ENCODE measurements at regions of chrX and their contacts with region 1.

Region 1: DNA sequence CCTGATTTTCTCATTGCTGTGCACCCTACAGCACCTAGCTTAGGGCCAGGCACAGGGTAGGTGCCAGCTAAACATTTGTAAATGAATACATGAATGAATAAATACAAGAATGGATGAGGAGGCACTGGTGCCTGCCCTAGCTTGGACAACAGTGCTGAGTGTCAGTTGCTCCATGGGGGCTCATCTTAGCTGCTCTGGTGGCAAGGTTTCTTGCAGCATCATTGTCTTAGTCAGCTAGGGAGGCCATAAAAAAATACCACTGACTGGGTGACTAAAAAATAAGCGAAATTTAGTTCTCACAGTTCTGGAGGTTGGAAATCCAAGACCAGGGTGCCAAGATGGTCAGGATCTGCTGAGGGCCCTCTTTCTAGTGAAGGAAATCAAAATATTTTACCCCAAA is 31.2 kb downstream of the TMEM31 start:
- DNase-seq: no peak
- H3K4me3 ChIP-seq: peak overlapping the region in 2 of 4 experiments; percentile 3 to 81; a peak in 3 of 8 replicates
- H3K27ac ChIP-seq: peak overlapping the region; percentile 81
- H3K4me1 ChIP-seq: peaks cover 2 to 16% (median 9%) of the 10 kb centered on the region in 4 experiments; a peak in 5 of 7 replicates
- H3K27me3 ChIP-seq: no peaks in the 10 kb centered on the region
- CTCF ChIP-seq: no peak
- EP300 ChIP-seq: no peak
- POLR2A ChIP-seq: no peak
- RAD21 ChIP-seq: no peak

Region 2: GRCh38 chrX:103711533-103712369 is 30.1 kb before region 1 on chrX:
- CTCF ChIA-PET with region 1: interaction called, 12 read pairs
- POLR2A ChIA-PET with region 1: interaction called, 17 read pairs
- DNase-seq: peak in 1 of 2 experiments; percentile 78
- H3K4me3 ChIP-seq: no peak overlapping the region
- H3K27ac ChIP-seq: peak overlapping the region; percentile 62; the same call in 1 of the 2 replicates
- H3K4me1 ChIP-seq: peaks cover 0 to 6% (median 3%) of the 10 kb centered on the region in 4 experiments; a peak in 5 of 7 replicates
- H3K27me3 ChIP-seq: no peaks in the 10 kb centered on the region
- CTCF ChIP-seq: peak in 2 of 3 experiments; percentile 51 to 70; a peak in 3 of 4 replicates
- EP300 ChIP-seq: no peak
- POLR2A ChIP-seq: no peak
- RAD21 ChIP-seq: peak; percentile 61 to 70

Region 3: GRCh38 chrX:103716962-103717361 is 24.9 kb before region 1 on chrX:
- CTCF ChIA-PET with region 1: interaction called, 12 read pairs
- POLR2A ChIA-PET with region 1: interaction called, 17 read pairs
- DNase-seq: no peak
- H3K4me3 ChIP-seq: no peak overlapping the region
- H3K27ac ChIP-seq: no peak overlapping the region
- H3K4me1 ChIP-seq: peaks cover 0 to 2% (median 0%) of the 10 kb centered on the region in 4 experiments; a peak in 3 of 7 replicates
- H3K27me3 ChIP-seq: no peaks in the 10 kb centered on the region
- CTCF ChIP-seq: no peak
- EP300 ChIP-seq: no peak
- POLR2A ChIP-seq: no peak
- RAD21 ChIP-seq: no peak

Region 4: DNA sequence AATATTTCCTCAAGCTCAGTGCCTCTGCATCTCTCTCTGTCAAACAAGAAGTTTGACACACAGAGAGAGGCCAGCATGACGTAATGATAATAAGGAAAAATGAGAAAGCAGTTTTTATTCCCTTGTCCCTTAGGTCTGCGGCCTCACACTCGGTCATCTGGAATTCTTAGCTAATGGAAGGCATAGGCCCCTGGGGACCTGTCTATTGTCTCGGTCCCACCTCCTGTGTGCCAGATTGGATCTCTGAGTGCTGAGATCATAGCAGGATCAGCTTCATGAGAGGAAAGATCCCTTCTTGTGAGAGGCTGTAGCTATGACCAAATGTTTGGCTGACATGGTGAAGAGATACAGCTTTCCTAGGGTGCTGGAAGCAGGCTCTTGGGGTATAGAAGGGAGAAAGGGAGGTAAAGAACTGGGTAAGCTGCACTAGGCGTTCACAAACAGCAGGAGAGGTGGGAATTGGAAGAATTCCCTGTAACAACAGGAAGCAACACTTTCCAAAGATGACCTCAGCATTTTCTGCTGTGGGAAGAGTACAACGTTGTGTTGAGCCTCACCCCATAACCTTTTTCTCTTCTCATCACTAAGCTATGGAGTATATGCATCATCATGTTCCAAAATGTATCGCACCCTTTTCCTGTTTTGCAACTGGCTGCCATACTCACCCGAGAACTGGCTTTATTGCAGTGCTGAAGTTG is 10.9 kb before region 1 on chrX:
- CTCF ChIA-PET with region 1: interaction called, 5 read pairs
- POLR2A ChIA-PET with region 1: interaction called, 26 read pairs
- DNase-seq: no peak
- H3K4me3 ChIP-seq: no peak overlapping the region
- H3K27ac ChIP-seq: no peak overlapping the region
- H3K4me1 ChIP-seq: peaks cover 7 to 22% (median 16%) of the 10 kb centered on the region in 4 experiments
- H3K27me3 ChIP-seq: no peaks in the 10 kb centered on the region; a peak in 1 of 7 replicates
- CTCF ChIP-seq: no peak
- EP300 ChIP-seq: no peak
- POLR2A ChIP-seq: no peak
- RAD21 ChIP-seq: no peak

Region 5: GRCh38 chrX:103774070-103774642 is 32.3 kb after region 1 on chrX:
- CTCF ChIA-PET with region 1: interaction called, 6 read pairs
- POLR2A ChIA-PET with region 1: interaction called, 11 read pairs
- DNase-seq: no peak
- H3K4me3 ChIP-seq: no peak overlapping the region
- H3K27ac ChIP-seq: no peak overlapping the region
- H3K4me1 ChIP-seq: no peaks in the 10 kb centered on the region; a peak in 2 of 7 replicates
- H3K27me3 ChIP-seq: no peaks in the 10 kb centered on the region
- CTCF ChIP-seq: peak; percentile 9 to 36 (median 29)
- EP300 ChIP-seq: no peak
- POLR2A ChIP-seq: no peak
- RAD21 ChIP-seq: peak; percentile 61 to 67

Measured in H1 (cell line).